ENCODE measurements at regions of chr3 and their contacts with region 1.

Region 1: DNA sequence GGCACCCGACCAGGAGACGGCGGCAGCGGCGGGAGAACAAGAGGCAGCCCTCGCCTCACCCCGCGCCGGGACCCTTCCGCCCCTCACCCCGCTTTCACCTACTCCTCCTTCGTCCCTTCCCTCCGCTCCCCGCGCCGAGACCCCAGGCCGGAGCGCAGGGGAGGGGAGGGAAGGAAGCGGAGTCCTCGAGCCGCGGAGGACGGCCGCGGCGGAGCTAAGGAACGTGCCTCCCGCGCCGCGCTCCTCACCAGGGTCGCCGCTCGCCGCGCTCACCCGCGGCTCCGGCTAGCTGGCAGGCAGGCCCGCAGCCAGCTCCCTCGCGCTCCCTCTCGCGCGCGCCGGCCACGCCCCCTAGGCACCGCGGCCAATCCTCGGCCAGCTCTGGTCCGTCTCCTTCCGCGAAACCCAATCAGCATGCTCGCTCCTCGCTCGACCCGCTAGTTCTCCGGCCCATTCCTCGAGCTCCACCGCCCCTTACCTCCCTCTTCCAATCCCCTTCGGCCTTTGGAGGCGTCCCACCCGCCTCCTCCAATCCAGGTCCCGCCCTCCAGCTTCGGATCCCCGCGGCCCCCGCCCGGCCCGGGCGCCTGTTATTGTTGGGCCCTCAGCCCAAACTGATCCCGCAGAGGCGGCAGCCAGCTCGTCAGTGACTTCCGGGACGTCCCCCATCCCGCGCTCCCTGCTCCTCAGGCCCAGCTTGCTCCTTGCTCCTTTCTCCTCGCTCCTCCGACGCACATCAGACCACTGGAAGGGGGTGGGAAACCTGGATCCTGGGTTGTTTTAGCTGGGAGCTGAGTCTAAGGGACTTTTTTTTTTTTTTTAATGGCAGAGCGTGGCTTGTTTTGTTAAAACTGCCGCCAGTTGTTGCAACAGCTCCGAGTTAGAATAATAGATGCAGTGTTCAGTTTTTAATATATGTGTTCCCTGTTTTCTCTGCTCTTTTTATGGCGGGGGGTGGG is at the start of gene DCBLD2:
- DNase-seq: peak; percentile 99
- H3K4me3 Mint-ChIP-seq: peak within 1 kb of the TSS; percentile 90
- H3K27ac Mint-ChIP-seq: peak within 1 kb of the TSS; percentile 93
- H3K4me1 Mint-ChIP-seq: peaks cover 24% of the 10 kb centered on the region
- H3K27me3 Mint-ChIP-seq: no peaks in the 10 kb centered on the region
- CTCF ChIP-seq: no peak
- total RNA-seq, gene DCBLD2: 161 and 206 TPM in 2 replicates

Region 2: DNA sequence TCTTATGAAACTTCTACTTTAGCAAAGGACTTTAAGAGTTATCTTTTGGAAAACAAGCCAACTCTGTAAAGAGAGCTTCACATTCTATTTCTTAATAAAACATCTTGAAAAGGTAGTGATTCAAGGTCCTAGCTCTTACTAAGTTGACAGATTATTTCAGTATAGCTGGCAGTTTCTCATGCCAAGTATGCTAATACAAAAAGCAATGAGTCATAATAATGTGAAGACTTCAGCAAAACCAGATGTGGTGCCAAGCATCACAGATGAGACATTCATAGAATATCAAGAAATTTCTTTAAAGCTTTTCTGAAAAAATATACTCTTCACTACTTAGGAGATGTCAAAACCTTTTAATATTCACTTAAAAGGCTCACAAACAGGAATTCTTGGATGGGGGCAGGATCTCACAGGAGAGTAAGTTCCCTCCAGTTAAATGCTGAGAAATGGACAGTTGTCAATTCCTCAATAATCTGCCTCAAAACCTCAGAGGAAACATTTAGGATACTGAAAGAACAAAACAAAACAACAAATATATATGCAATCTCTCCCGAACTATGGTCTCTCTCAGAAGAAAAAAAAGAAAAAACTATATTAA is 45.8 kb before region 1 on chr3:
- CTCF ChIA-PET with region 1: interaction called, 3 read pairs
- POLR2A ChIA-PET with region 1: interaction called, 20 read pairs
- intact Hi-C with region 1: no loop called
- DNase-seq: peak; percentile 90
- H3K4me3 Mint-ChIP-seq: no peak overlapping the region
- H3K27ac Mint-ChIP-seq: peak overlapping the region; percentile 61
- H3K4me1 Mint-ChIP-seq: peaks cover 11% of the 10 kb centered on the region
- H3K27me3 Mint-ChIP-seq: no peaks in the 10 kb centered on the region
- CTCF ChIP-seq: no peak

Region 3: DNA sequence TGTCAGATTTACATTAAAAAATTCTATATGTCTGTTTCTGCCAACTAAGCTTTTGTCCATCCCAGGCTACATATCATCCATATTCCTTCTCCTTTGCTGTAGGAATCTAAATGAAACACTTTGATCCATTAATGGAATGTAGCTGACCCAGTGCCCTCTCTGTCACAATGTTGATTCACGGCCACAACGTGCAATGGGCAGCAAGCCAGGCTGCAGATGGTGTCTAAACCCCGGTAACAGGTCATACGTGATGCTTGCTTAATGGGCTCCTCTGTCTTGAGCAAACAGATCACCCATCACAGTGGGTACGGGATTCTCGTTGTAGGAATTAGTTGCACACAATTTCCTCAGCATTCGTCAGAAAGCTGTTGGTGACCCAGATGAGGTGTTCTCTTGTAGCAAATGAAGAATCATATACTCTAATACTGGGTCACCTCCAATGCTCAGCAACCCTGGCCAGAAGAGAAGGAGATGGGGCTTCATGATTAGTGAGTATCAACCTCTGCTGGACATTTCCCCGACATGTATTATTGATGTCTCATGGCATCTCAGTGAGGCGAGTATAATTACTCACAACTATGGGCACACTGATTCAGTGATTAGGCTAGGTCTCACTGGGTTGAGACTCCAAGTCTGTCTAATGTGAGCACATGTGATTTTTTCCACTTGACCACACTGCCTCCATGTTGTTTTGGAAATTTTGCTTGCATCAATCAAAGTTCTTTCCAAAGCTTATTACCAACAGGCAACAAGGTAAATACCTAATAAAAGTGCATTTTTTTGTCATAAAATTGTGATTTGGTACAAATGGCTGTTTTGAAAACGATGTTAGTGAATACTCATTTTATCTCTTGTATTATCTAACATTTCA is 12.8 kb after region 1 on chr3:
- CTCF ChIA-PET with region 1: no interaction called
- POLR2A ChIA-PET with region 1: interaction called, 14 read pairs
- intact Hi-C with region 1: no loop called
- DNase-seq: peak; percentile 75
- H3K4me3 Mint-ChIP-seq: no peak overlapping the region
- H3K27ac Mint-ChIP-seq: no peak overlapping the region
- H3K4me1 Mint-ChIP-seq: peaks cover 6% of the 10 kb centered on the region
- H3K27me3 Mint-ChIP-seq: no peaks in the 10 kb centered on the region
- CTCF ChIP-seq: no peak

Region 4: GRCh38 chr3:98980915-98981596 is 79.4 kb after region 1 on chr3:
- CTCF ChIA-PET with region 1: no interaction called
- POLR2A ChIA-PET with region 1: interaction called, 25 read pairs
- intact Hi-C with region 1: loop called (anchors 1 kb)
- DNase-seq: no peak
- H3K4me3 Mint-ChIP-seq: no peak overlapping the region
- H3K27ac Mint-ChIP-seq: no peak overlapping the region
- H3K4me1 Mint-ChIP-seq: peaks cover 23% of the 10 kb centered on the region
- H3K27me3 Mint-ChIP-seq: no peaks in the 10 kb centered on the region
- CTCF ChIP-seq: no peak

Measured in MCF 10A (cell line).